HAP-1 (cell line): ENCODE measurements at regions of chr19 and their contacts with region 1.

Region 1: DNA sequence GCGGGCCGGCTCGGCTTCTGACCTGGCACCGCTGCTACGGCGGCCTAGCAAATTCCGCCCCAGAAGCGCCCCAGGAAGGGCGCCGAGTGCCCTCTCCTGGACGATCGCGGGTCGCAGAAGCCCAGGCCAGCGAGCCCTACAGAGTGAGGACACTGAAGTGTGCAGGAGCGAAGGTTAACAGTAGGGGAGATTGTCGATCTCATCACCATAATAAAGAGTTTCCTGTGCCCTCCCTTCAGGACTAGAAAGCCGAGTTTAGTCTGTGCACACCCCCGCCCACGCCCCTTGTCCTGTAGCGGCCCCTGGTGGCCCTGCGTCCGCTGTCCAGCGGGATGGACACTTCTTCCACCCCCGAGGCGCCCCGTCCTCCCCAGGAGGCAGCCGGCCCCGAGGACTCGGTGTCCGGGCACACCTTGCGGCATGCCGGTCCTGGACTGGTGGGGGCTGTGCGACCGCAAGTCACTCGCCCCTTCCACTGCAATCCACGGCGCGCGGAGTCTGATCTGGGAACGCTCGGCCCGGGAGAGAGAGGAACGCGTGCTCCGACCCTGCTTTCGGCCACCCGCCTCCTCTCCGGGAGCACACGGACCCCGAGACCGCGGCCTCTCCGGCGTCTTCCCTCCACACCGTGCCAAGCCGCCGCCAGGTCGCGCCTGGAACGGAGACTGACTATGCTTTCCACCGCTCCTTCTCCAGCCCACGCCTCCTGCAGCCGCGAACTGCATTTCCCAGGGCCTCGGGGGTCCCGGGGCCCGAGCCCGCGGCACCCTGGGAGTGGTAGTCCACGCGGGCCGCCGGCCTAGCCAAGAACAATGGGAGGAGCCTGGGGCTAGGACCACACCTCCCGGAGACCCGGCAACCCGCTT is 769 bp upstream of the KMT2B start:
- DNase-seq: peak; percentile 97
- H3K4me3 ChIP-seq: peak overlapping the region; percentile 55
- H3K4me1 ChIP-seq: peaks cover 9% of the 10 kb centered on the region
- H3K27me3 ChIP-seq: no peaks in the 10 kb centered on the region

Region 2: DNA sequence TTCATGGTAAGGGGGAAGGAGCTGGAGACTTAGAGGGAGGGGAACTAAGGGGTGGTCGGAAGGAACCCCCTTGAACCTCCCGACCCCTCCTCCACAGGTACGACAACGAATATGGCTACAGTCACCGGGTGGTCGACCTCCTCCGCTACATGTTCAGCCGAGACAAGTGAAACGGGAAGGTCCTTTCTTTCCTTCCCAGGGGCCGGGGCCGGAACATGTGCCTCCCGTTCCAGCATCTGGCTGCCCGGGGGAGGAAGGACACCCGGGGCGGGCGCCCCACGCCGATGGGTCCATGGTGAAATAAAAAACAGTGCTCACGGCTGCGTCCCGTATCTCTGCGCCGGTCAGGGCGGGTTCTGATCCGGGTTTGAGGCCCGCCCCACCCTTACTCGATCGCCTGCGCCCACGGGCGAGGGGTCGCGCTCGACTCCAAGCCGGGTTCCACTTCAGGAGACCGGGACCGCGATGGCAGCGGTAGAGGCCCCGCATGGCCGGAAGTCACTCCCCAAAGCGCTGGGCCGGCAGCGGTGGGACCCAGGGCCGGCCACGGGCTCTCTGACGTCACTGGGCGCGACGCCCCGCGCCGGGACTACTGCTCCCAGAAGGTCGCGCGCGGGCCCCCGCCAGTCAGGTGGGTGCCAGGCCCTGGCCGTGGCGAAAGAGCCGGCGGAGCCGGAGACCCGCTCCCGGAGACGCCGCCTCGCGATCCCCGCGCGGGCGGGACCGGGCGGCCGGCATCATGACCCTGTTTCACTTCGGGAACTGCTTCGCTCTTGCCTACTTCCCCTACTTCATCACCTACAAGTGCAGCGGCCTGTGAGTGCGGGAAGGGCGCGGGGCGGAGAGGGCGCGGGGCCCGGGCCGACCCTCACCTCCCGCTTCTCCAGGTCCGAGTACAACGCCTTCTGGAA is 171.8 kb before region 1 on chr19 and contains the start of gene TMEM147:
- in situ Hi-C with region 1: loop called (anchors 5 kb)
- DNase-seq: peak; percentile 84 to 95
- H3K4me3 ChIP-seq: peak within 1 kb of the TSS; percentile 97
- H3K4me1 ChIP-seq: peaks cover 9% of the 10 kb centered on the region
- H3K27me3 ChIP-seq: no peaks in the 10 kb centered on the region

Region 3: GRCh38 chr19:35856546-35857149 is 139.6 kb after region 1 on chr19 and contains the start of gene KIRREL2:
- in situ Hi-C with region 1: no loop called
- DNase-seq: peak in 1 of 2 experiments; percentile 74
- H3K4me3 ChIP-seq: peak within 1 kb of the TSS; percentile 50
- H3K4me1 ChIP-seq: peaks cover 6% of the 10 kb centered on the region
- H3K27me3 ChIP-seq: no peaks in the 10 kb centered on the region

Region 4: GRCh38 chr19:35919306-35919705 is 202.3 kb after region 1 on chr19:
- in situ Hi-C with region 1: no loop called
- DNase-seq: no peak
- H3K4me3 ChIP-seq: no peak overlapping the region
- H3K4me1 ChIP-seq: no peaks in the 10 kb centered on the region
- H3K27me3 ChIP-seq: peaks cover 7% of the 10 kb centered on the region; the same call in 1 of the 2 replicates

Region 5: DNA sequence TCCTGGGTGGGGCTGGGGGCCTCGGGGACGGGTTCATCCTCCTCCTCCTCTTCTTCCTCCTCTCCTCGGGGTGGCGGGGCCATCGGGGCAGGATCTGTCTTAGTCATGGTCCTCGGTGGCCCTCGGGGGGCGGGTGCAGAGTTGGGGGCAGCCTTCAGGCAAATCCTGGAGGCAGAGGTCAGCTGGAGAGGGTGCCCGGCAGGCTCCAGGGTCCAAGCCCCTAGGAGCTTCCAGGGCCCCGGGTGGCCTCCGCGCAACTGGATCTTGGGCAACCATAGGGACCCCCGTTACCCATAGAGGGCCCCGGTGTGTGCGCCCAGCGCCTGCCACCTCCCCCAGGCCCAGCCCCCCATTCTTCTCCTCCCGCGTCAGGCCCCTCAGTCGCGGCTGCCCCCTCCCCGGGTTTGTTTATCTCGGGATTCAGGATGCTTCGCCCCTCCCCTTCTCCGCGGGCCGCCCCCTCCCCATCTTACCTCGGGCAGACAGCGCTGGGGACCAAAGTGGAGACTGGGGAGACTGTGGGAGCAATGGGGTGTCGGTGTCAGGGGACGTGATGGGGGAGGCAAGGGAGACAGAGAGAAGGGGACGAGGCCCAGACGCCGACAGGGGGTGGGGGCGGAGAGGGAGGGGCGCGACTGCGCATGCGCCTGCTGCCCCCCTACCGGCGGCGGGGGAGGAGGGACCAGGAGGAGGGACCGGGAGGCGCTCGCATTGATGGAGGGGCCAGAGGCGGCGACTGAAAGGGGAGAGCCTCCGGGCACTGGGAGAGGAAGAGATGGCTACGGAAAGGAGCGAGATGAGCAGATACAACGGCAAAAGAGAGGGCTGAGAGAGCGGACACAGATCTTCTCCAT is 315.4 kb after region 1 on chr19 and contains the start of gene CLIP3:
- in situ Hi-C with region 1: no loop called
- DNase-seq: no peak
- H3K4me3 ChIP-seq: no peak within 1 kb of the TSS
- H3K4me1 ChIP-seq: no peaks in the 10 kb centered on the region
- H3K27me3 ChIP-seq: no peaks in the 10 kb centered on the region